ENCODE measurements at regions of chr19 and their contacts with region 1.

Region 1: DNA sequence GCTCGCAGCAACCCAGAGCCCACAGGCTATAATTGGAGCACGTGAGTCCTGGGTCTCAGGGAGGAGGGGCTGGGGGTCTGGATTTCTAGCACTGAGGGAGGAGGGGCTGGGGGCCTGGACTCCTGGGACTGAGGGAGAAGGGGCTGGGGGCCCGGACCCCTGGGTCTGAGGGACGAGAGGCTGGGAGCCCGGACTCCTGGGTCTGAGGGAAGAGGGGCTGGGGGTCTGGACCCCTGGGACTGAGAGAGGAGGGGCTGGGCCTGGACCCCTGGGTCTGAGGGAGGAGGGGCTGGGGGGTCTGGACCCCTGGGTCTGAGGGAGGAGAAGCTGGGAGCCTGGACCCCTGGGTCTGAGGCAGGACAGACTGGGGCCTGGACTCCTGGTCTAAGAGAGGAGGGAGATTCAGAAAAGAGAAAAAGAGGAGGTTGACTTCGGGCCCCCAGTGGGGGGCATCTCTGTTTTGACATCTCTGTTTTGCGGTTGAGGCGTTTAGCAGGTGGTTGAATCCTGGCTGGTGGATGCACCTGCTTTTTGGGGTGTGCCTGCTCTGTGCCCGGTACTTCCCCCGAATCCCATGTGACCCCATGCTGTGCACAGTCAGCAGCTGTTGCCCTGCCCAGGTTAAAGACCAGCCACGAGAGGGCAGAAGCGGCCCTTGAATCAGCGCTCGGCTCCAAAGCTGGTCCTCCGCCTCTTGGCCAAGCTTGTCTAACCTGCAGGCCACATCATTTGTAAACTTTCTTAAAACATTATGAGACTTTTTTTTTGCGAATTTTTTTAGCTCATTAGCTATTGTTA is 10.5 kb downstream of the PVR start:
- DNase-seq: peak; percentile 62
- ATAC-seq: peak; percentile 94
- H3K4me3 Mint-ChIP-seq: no peak overlapping the region
- H3K27ac Mint-ChIP-seq: peak overlapping the region; percentile 53
- H3K4me1 Mint-ChIP-seq: peaks cover 21% of the 10 kb centered on the region
- H3K27me3 Mint-ChIP-seq: no peaks in the 10 kb centered on the region
- CTCF ChIP-seq: no peak

Region 2: GRCh38 chr19:44512326-44513298 is 141.6 kb before region 1 on chr19:
- CTCF ChIA-PET with region 1: no interaction called
- POLR2A ChIA-PET with region 1: no interaction called
- intact Hi-C with region 1: no loop called
- DNase-seq: no peak
- ATAC-seq: no peak
- H3K4me3 Mint-ChIP-seq: no peak overlapping the region
- H3K27ac Mint-ChIP-seq: no peak overlapping the region
- H3K4me1 Mint-ChIP-seq: no peaks in the 10 kb centered on the region
- H3K27me3 Mint-ChIP-seq: peaks cover 23% of the 10 kb centered on the region
- CTCF ChIP-seq: no peak

Region 3: GRCh38 chr19:44570984-44571684 is 83.0 kb before region 1 on chr19:
- CTCF ChIA-PET with region 1: interaction called, 11 read pairs
- POLR2A ChIA-PET with region 1: no interaction called
- intact Hi-C with region 1: loop called (anchors 1 kb)
- DNase-seq: no peak
- ATAC-seq: no peak
- H3K4me3 Mint-ChIP-seq: no peak overlapping the region
- H3K27ac Mint-ChIP-seq: no peak overlapping the region
- H3K4me1 Mint-ChIP-seq: no peaks in the 10 kb centered on the region
- H3K27me3 Mint-ChIP-seq: peaks cover 12% of the 10 kb centered on the region
- CTCF ChIP-seq: no peak

Region 4: DNA sequence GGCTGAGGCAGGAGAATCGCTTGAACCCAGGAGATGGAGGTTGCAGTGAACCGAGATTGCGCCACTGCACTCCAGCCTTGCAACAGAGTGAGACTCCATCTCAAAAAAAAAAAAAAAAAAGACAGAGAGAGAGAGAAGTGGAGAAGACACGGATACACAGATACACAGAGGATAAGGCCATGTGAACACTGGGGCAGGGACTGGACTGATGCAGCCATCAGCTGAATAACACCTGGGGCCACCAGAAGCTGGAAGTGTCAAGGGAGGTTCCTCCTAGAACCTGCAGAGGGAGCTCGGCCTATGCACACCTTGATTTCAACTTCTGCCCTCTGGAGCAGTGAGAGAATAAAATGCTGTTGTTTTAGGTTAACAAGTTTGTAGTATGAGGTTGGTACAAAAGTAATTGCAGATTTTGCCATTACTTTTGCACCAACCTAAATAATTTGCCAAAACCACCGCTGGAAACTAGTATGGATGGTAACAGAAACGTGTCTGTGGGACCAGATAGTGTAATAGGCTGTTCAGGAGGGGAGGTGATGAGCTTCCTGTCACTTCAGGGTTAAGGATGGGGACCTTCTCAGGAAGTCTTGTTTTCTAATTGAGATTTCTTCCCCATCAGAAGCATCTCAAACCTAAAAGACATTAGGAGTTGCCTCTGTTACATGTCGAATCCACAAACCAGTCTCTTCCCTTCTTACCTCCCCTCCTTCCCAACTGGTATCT is 77.2 kb before region 1 on chr19:
- CTCF ChIA-PET with region 1: interaction called, 3 read pairs
- POLR2A ChIA-PET with region 1: no interaction called
- intact Hi-C with region 1: loop called (anchors 1 kb)
- DNase-seq: no peak
- ATAC-seq: no peak
- H3K4me3 Mint-ChIP-seq: no peak overlapping the region
- H3K27ac Mint-ChIP-seq: no peak overlapping the region
- H3K4me1 Mint-ChIP-seq: no peaks in the 10 kb centered on the region
- H3K27me3 Mint-ChIP-seq: peaks cover 7% of the 10 kb centered on the region
- CTCF ChIP-seq: no peak

Region 5: GRCh38 chr19:44689056-44689895 is 35.1 kb after region 1 on chr19:
- CTCF ChIA-PET with region 1: interaction called, 4 read pairs
- POLR2A ChIA-PET with region 1: interaction called, 3 read pairs
- intact Hi-C with region 1: loop called (anchors 2 kb)
- DNase-seq: peak; percentile 73
- ATAC-seq: peak; percentile 51
- H3K4me3 Mint-ChIP-seq: no peak overlapping the region
- H3K27ac Mint-ChIP-seq: no peak overlapping the region
- H3K4me1 Mint-ChIP-seq: peaks cover 51% of the 10 kb centered on the region
- H3K27me3 Mint-ChIP-seq: peaks cover 11% of the 10 kb centered on the region
- CTCF ChIP-seq: no peak